ENCODE measurements at regions of chr22 and their contacts with region 1.

Region 1: GRCh38 chr22:46296257-46297150 is at the start of gene GTSE1:
- DNase-seq: peak; percentile 100
- ATAC-seq: peak; percentile 98
- total RNA-seq, gene GTSE1: 0.92 TPM

Region 2: GRCh38 chr22:46023558-46023981 is 272.9 kb before region 1 on chr22:
- intact Hi-C with region 1: no loop called
- DNase-seq: no peak
- ATAC-seq: no peak

Region 3: GRCh38 chr22:46122511-46122971 is 174.0 kb before region 1 on chr22:
- intact Hi-C with region 1: loop called (anchors 5 kb)
- DNase-seq: peak; percentile 90
- ATAC-seq: peak; percentile 57

Region 4: GRCh38 chr22:46352691-46353386 is 56.3 kb after region 1 on chr22:
- intact Hi-C with region 1: no loop called
- DNase-seq: peak; percentile 73
- ATAC-seq: peak; percentile 63